HepG2 (cell line): ENCODE measurements at regions of chr17 and their contacts with region 1.

Region 1: GRCh38 chr17:42779936-42780850 is at the start of gene WNK4:
- DNase-seq: peak; percentile 98
- ATAC-seq: peak; percentile 88
- H3K4me3 ChIP-seq: peak within 1 kb of the TSS; percentile 87 to 99 (median 92)
- H3K27ac ChIP-seq: peak within 1 kb of the TSS; percentile 98
- H3K4me1 ChIP-seq: peaks cover 64% of the 10 kb centered on the region
- H3K27me3 ChIP-seq: no peaks in the 10 kb centered on the region; a peak in 1 of 5 replicates
- CTCF ChIP-seq: 0 out of 2 replicates have a peak, but pooled peaks have one; percentile 42
- EP300 ChIP-seq: peak in 1 of 2 experiments; percentile 92; a peak in 3 of 4 replicates
- POLR2A ChIP-seq: peak; percentile 90
- RAD21 ChIP-seq: peak; percentile 17
- total RNA-seq, gene WNK4: 1.5 and 2.7 TPM in 2 replicates

Region 2: DNA sequence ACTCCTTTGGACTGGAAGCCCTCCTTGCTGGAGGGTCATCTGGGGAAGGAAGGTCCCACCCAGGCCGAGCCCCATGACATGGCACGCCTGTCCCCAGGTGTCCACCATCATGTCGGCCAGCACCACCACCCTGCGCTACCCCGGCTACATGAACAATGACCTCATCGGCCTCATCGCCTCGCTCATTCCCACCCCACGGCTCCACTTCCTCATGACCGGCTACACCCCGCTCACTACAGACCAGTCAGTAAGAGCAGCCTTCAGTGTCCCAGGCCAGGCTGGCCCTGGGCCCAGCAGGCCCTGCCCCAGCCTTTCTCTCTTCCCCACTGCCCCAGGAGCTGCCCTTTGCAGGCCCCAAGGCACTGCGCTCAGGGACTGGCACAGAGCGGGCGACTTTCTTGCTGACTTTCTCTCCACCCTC is 114.6 kb before region 1 on chr17:
- CTCF ChIA-PET with region 1: no interaction called
- POLR2A ChIA-PET with region 1: no interaction called
- in situ Hi-C with region 1: no loop called
- intact Hi-C with region 1: no loop called
- DNase-seq: no peak
- ATAC-seq: no peak; the same call in 2 of the 3 replicates
- H3K4me3 ChIP-seq: no peak overlapping the region
- H3K27ac ChIP-seq: no peak overlapping the region
- H3K4me1 ChIP-seq: peaks cover 34% of the 10 kb centered on the region
- H3K27me3 ChIP-seq: no peaks in the 10 kb centered on the region
- CTCF ChIP-seq: no peak
- EP300 ChIP-seq: no peak
- POLR2A ChIP-seq: no peak; a peak in 1 of 4 replicates
- RAD21 ChIP-seq: no peak

Region 3: GRCh38 chr17:42677008-42677857 is 103.0 kb before region 1 on chr17:
- CTCF ChIA-PET with region 1: no interaction called
- POLR2A ChIA-PET with region 1: interaction called, 11 read pairs
- in situ Hi-C with region 1: no loop called
- intact Hi-C with region 1: no loop called
- DNase-seq: peak; percentile 99
- ATAC-seq: peak; percentile 64
- H3K4me3 ChIP-seq: peak overlapping the region; percentile 76 to 99 (median 83)
- H3K27ac ChIP-seq: peak overlapping the region; percentile 92
- H3K4me1 ChIP-seq: peaks cover 51% of the 10 kb centered on the region
- H3K27me3 ChIP-seq: no peaks in the 10 kb centered on the region
- CTCF ChIP-seq: no peak
- EP300 ChIP-seq: peak in 1 of 2 experiments; percentile 54; a peak in 1 of 4 replicates
- POLR2A ChIP-seq: no peak; a peak in 1 of 4 replicates
- RAD21 ChIP-seq: no peak

Region 4: DNA sequence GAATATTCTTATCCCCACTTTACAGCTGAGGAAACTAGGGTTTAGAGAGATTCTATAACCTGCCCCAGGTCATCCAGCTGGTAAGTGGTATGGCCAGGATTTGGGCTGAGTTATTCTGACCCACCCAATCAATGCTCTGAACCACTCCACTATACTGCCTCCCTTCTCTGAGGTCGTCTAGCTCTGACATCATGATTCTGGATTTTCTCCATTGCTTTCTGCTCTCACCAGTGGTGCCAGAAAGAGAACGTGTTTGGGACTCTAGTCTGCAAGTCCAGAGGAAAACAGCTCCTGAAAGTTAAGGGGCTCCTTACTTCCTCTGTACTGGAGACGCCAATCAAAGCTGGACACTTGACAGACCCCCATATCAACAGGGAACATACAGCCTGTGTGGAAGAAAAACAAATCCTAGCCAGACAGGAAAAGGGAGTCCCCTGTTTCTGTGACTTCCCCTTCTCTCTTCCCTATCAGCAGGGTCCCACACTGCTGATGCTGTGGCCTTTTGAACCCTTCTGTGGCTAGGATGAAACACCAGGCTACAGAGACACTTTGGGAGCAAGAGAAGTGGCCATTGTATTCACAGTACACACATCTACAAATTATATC is 29.4 kb before region 1 on chr17:
- CTCF ChIA-PET with region 1: no interaction called
- POLR2A ChIA-PET with region 1: interaction called, 19 read pairs
- in situ Hi-C with region 1: no loop called
- intact Hi-C with region 1: no loop called
- DNase-seq: no peak
- ATAC-seq: 0 out of 3 replicates have a peak, but pooled peaks have one; percentile 11
- H3K4me3 ChIP-seq: no peak overlapping the region
- H3K27ac ChIP-seq: no peak overlapping the region
- H3K4me1 ChIP-seq: peaks cover 40% of the 10 kb centered on the region
- H3K27me3 ChIP-seq: no peaks in the 10 kb centered on the region
- CTCF ChIP-seq: no peak
- EP300 ChIP-seq: no peak
- POLR2A ChIP-seq: no peak
- RAD21 ChIP-seq: no peak

Region 5: GRCh38 chr17:42766124-42766523 is 14.1 kb before region 1 on chr17:
- CTCF ChIA-PET with region 1: no interaction called
- POLR2A ChIA-PET with region 1: interaction called, 63 read pairs
- in situ Hi-C with region 1: no loop called
- intact Hi-C with region 1: no loop called
- DNase-seq: peak; percentile 81
- ATAC-seq: peak; percentile 57
- H3K4me3 ChIP-seq: no peak overlapping the region
- H3K27ac ChIP-seq: peak overlapping the region; percentile 37
- H3K4me1 ChIP-seq: peaks cover 55% of the 10 kb centered on the region
- H3K27me3 ChIP-seq: peaks cover 0 to 12% of the 10 kb centered on the region in 2 experiments; a peak in 2 of 5 replicates
- CTCF ChIP-seq: no peak
- EP300 ChIP-seq: peak in 1 of 2 experiments; percentile 46; a peak in 1 of 4 replicates
- POLR2A ChIP-seq: no peak
- RAD21 ChIP-seq: no peak

Region 6: GRCh38 chr17:42809250-42809649 is 29.1 kb after region 1 on chr17:
- CTCF ChIA-PET with region 1: no interaction called
- POLR2A ChIA-PET with region 1: interaction called, 75 read pairs
- in situ Hi-C with region 1: no loop called
- intact Hi-C with region 1: no loop called
- DNase-seq: no peak
- ATAC-seq: no peak
- H3K4me3 ChIP-seq: no peak overlapping the region
- H3K27ac ChIP-seq: no peak overlapping the region
- H3K4me1 ChIP-seq: peaks cover 18% of the 10 kb centered on the region
- H3K27me3 ChIP-seq: no peaks in the 10 kb centered on the region
- CTCF ChIP-seq: no peak
- EP300 ChIP-seq: no peak
- POLR2A ChIP-seq: no peak
- RAD21 ChIP-seq: no peak